ENCODE measurements at regions of chr11 and their contacts with region 1.

Region 1: GRCh38 chr11:119721129-119722120 is 7.6 kb downstream of the NECTIN1 start:
- DNase-seq: peak in 4 of 5 donors; percentile 50 to 60 (median 54)
- ATAC-seq: peak; percentile 57 to 72 (median 60)
- H3K4me3 ChIP-seq: no peak overlapping the region
- H3K27ac ChIP-seq: peak overlapping the region in 1 of 12 donors; percentile 18
- H3K4me1 ChIP-seq: peaks cover 0 to 14% (median 3%) of the 10 kb centered on the region in 12 donors
- H3K27me3 ChIP-seq: no peaks in the 10 kb centered on the region
- CTCF ChIP-seq: peak; percentile 19 to 68 (median 47)
- POLR2A ChIP-seq: no peak

Region 2: GRCh38 chr11:119684361-119685110 is 36.9 kb before region 1 on chr11:
- intact Hi-C with region 1: loop called in 4 of 10 experiments (anchors 5 kb)
- DNase-seq: peak in 1 of 5 donors; percentile 63
- ATAC-seq: peak in 3 of 4 donors; percentile 21 to 49 (median 36)
- H3K4me3 ChIP-seq: no peak overlapping the region
- H3K27ac ChIP-seq: no peak overlapping the region
- H3K4me1 ChIP-seq: peaks cover 0 to 32% (median 21%) of the 10 kb centered on the region in 12 donors
- H3K27me3 ChIP-seq: no peaks in the 10 kb centered on the region
- CTCF ChIP-seq: no peak
- POLR2A ChIP-seq: no peak

Measured in heart left ventricle (tissue), 16 donors.